ENCODE measurements at regions of chr16 and their contacts with region 1.

Region 1: DNA sequence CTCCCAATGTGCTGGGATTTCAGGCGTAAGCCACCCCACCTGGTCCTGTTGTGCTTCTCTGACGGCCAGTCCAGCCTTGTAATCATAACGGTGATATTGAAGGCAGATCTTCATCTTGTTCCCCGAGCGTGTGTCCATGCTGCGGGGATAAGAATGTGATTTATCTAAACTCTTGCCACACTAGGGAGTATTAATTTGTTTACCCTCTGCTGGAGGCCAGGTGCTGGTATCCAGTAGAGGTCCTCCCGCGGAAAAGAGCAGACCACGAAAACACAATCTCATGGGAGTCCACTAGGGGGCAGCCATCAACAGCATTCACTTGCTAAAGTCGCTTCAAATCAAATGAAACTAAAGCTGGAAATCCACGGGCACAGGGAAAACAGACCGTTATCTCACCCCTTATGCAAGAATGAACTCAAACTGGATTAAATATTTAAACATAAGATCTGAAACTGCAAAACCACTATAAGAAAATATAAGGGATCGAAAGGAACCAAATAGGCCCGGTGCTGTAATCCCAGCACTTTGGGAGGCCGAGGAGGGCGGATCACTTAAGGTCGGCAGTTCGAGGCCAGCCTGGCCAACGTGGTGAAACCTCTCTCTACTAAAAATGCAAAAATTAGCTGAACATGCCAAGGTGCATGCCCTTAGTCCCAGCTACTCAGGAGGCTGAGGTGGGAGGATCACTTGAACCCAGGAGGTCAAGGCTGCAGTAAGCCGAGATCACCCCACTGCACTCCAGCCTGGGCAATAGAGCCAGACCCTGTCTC is 22.3 kb upstream of the RBBP6 start:
- DNase-seq: peak; percentile 91
- ATAC-seq: peak; percentile 92
- H3K4me3 ChIP-seq: peak overlapping the region in 2 of 3 experiments; percentile 20 to 53; a peak in 4 of 6 replicates
- H3K27ac ChIP-seq: no peak overlapping the region
- H3K4me1 ChIP-seq: peaks cover 17% of the 10 kb centered on the region
- H3K27me3 ChIP-seq: no peaks in the 10 kb centered on the region; a peak in 1 of 5 replicates
- CTCF ChIP-seq: peak; percentile 94
- EP300 ChIP-seq: no peak
- POLR2A ChIP-seq: no peak
- RAD21 ChIP-seq: peak; percentile 83

Region 2: DNA sequence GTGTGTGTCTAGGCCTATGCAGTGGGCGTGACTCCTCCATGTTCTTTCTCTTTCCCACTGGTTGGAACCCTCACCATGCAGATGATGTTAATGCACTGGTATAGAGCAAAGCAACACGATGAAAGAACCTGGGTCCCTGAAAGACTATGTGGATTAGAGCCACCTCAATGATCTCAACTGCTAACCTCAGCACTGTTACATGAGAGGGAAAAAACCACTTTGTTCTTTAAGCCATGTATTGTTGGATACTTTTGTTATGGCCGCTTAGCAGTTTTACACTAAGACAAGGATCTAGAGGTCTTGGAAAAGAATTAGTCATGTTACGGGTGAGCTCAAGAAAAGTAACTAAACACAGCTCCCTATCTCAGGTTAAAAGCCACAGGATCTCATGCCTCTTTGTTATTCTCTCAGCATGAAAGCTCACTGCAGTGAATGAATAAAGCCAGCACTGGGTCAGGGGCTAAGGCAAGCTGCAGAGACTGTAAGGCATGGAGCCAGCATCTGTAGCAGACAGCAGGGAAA is 34.3 kb before region 1 on chr16:
- CTCF ChIA-PET with region 1: no interaction called
- POLR2A ChIA-PET with region 1: no interaction called
- in situ Hi-C with region 1: no loop called
- intact Hi-C with region 1: no loop called
- DNase-seq: no peak
- ATAC-seq: no peak
- H3K4me3 ChIP-seq: no peak overlapping the region
- H3K27ac ChIP-seq: no peak overlapping the region
- H3K4me1 ChIP-seq: no peaks in the 10 kb centered on the region
- H3K27me3 ChIP-seq: peaks cover 0 to 33% of the 10 kb centered on the region in 2 experiments; a peak in 2 of 5 replicates
- CTCF ChIP-seq: no peak
- EP300 ChIP-seq: no peak
- POLR2A ChIP-seq: no peak
- RAD21 ChIP-seq: no peak

Region 3: DNA sequence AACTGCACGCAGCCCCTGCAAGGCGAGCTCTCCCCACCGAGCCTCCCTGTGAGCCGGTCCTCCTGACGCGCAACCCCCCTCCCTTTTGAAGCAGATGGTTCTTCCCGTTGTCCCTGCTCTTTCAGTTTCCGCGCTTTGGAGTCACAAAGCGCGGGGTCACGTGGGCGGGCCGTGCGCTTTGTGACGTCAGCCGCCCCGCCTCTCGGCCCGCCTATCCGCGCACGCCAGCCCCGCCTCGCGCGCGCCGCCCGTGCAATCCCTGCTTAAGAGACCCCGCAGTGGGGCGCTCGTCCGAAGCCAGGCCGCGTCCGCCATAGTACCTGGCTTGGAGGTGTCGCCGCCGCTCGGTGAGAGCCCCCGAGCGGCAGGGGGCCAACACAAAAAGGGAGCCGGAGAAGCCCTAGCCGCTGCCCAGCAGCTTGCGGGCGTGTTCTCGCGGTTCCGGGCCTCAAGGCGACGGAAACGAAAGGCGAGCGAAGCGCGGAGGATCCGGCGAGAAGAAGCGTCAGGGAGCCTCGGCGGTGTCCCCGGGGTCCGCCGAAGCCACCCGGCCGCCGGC is 22.3 kb after region 1 on chr16 and contains the start of gene RBBP6:
- CTCF ChIA-PET with region 1: interaction called, 15 read pairs
- POLR2A ChIA-PET with region 1: interaction called, 3 read pairs
- in situ Hi-C with region 1: no loop called
- intact Hi-C with region 1: loop called (anchors 1 kb)
- DNase-seq: peak; percentile 94
- ATAC-seq: peak; percentile 90
- H3K4me3 ChIP-seq: peak within 1 kb of the TSS; percentile 95 to 96 (median 95)
- H3K27ac ChIP-seq: peak within 1 kb of the TSS; percentile 96
- H3K4me1 ChIP-seq: peaks cover 73% of the 10 kb centered on the region
- H3K27me3 ChIP-seq: no peaks in the 10 kb centered on the region; a peak in 1 of 5 replicates
- CTCF ChIP-seq: peak; percentile 79
- EP300 ChIP-seq: no peak; a peak in 1 of 4 replicates
- POLR2A ChIP-seq: peak; percentile 95 to 96
- RAD21 ChIP-seq: peak; percentile 11
- total RNA-seq, gene RBBP6: 37.1 and 45.0 TPM in 2 replicates

Region 4: DNA sequence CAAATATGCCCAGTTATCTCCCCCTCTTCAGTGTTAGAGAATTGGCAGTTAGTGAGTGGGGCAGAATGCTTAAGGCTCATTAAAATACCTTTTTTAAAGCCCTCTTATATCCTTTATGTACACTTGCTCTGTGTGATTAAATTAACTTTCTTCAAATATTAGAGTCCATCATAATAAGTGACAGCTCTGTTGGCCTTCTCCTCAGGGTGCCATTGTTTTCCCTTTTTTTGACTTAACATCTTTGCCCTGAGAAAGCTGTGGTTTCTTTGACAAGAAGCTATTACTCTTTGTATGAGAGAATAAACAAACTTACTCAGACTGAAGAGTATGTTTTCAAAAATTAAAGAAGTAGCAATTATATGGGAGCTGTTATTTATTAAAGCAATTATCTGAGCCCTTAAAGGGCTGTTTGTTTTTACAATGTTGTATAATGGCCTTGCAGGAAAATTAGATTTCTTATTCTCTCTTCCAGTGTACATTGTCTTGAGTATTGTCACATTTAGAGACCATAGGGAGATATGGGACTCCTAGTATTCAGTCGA is 35.7 kb after region 1 on chr16:
- CTCF ChIA-PET with region 1: no interaction called
- POLR2A ChIA-PET with region 1: no interaction called
- in situ Hi-C with region 1: no loop called
- intact Hi-C with region 1: loop called (anchors 5 kb)
- DNase-seq: no peak
- ATAC-seq: no peak
- H3K4me3 ChIP-seq: no peak overlapping the region
- H3K27ac ChIP-seq: no peak overlapping the region
- H3K4me1 ChIP-seq: no peaks in the 10 kb centered on the region
- H3K27me3 ChIP-seq: no peaks in the 10 kb centered on the region
- CTCF ChIP-seq: no peak
- EP300 ChIP-seq: no peak
- POLR2A ChIP-seq: no peak
- RAD21 ChIP-seq: no peak

Region 5: DNA sequence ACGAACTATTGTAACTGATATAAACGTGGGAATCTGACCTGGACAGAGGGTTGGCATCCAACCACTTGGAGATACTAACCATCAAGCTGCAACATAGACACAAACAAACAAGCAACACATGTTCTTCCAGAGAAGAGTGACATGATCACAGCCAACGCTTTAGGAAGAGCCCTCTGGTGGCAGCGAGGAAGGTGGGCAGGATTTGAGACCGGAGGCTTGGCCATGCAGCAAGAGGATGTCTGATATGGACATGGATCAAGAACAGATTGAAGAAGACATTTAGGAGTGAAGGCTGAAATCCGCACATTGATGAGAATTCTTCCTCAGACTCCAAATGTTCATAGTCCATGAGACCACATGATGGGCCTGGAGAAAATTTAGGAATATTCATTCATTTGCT is 172.1 kb after region 1 on chr16:
- CTCF ChIA-PET with region 1: interaction called, 23 read pairs
- POLR2A ChIA-PET with region 1: no interaction called
- in situ Hi-C with region 1: loop called (anchors 10 kb)
- intact Hi-C with region 1: loop called (anchors 1 kb)
- DNase-seq: peak; percentile 53
- ATAC-seq: peak; percentile 78
- H3K4me3 ChIP-seq: no peak overlapping the region
- H3K27ac ChIP-seq: no peak overlapping the region
- H3K4me1 ChIP-seq: peaks cover 34% of the 10 kb centered on the region
- H3K27me3 ChIP-seq: peaks cover 0 to 2% of the 10 kb centered on the region in 2 experiments; a peak in 1 of 5 replicates
- CTCF ChIP-seq: peak; percentile 81
- EP300 ChIP-seq: no peak
- POLR2A ChIP-seq: no peak
- RAD21 ChIP-seq: peak; percentile 56; the same call in 1 of the 2 replicates

Region 6: DNA sequence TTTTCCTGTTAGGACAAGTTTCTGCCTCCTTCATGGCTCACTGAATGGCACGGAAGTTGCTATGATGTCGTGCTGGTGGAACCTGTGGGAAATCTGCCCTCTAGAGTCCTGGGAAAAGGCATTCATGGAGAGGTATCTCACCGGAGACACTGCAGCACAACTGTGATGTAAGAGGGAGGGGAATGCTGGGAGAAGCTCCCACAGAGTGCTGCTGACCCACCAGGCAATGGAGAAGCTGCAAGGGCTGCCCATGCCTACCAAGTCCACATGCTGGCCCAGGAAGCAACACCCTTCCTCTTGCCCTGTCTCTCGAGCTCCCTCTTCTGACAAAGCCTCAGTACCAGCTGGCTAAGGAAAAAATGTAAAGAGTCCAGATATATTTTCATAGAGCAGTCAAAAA is 283.5 kb after region 1 on chr16:
- CTCF ChIA-PET with region 1: no interaction called
- POLR2A ChIA-PET with region 1: no interaction called
- in situ Hi-C with region 1: no loop called
- intact Hi-C with region 1: loop called (anchors 10 kb)
- DNase-seq: peak; percentile 48
- ATAC-seq: peak; percentile 67
- H3K4me3 ChIP-seq: no peak overlapping the region
- H3K27ac ChIP-seq: no peak overlapping the region
- H3K4me1 ChIP-seq: no peaks in the 10 kb centered on the region
- H3K27me3 ChIP-seq: no peaks in the 10 kb centered on the region
- CTCF ChIP-seq: peak; percentile 50
- EP300 ChIP-seq: no peak
- POLR2A ChIP-seq: no peak
- RAD21 ChIP-seq: no peak